CD8-positive, alpha-beta memory T cell (primary cell): ENCODE measurements at regions of chr5 and their contacts with region 1.

Region 1: DNA sequence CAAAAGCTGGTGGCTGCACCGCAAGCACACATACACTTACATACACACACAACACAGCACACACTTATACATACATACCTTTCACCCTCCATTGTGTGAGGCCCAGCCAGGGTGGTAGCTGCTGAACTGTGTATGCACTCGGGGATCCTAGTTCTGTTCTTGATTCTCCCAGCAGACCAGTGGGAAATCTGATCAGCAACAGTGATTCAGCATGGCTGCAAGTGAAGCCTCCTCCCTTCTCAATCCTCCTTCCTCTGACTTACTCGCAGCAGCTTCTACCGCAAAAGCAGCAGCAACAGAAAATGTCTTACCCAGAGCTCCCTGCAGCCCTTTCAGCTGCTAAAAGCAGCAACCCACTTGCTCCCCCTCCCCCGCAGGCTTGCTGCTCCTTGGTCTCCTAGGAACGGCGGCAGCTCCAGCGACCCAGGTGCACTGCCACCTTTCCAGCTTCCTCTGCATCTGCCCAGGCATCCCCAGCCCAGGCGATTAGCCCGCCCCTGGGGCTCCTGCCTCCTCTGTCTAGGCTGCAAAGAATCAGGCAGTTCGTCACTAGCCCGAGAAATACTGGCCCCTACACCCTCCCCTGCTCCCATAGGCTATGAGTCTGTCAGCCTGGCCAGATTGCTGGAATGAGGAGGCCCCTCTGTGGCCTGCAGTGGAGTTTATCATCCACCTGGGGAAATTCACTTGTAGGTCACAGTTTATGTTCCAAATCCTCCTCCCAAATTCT is at the start of gene KLHL3:
- DNase-seq: peak in 4 of 5 donors; percentile 2 to 52 (median 32)
- H3K4me3 ChIP-seq: peak within 1 kb of the TSS; percentile 74
- H3K4me3 Mint-ChIP-seq: no peak within 1 kb of the TSS
- H3K27ac ChIP-seq: no peak within 1 kb of the TSS
- H3K27ac Mint-ChIP-seq: no peak within 1 kb of the TSS
- H3K4me1 ChIP-seq: peaks cover 58% of the 10 kb centered on the region
- H3K4me1 Mint-ChIP-seq: peaks cover 0 to 16% (median 3%) of the 10 kb centered on the region in 3 donors
- H3K27me3 ChIP-seq: no peaks in the 10 kb centered on the region
- H3K27me3 Mint-ChIP-seq: no peaks in the 10 kb centered on the region
- total RNA-seq, gene KLHL3: 2.7 to 3.3 TPM

Region 2: GRCh38 chr5:137622850-137623249 is 112.9 kb before region 1 on chr5:
- CTCF ChIA-PET with region 1: no interaction called
- POLR2A ChIA-PET with region 1: no interaction called
- DNase-seq: no peak
- H3K4me3 ChIP-seq: no peak overlapping the region
- H3K4me3 Mint-ChIP-seq: no peak overlapping the region
- H3K27ac ChIP-seq: no peak overlapping the region
- H3K27ac Mint-ChIP-seq: peak overlapping the region in 1 of 8 donors; percentile 18
- H3K4me1 ChIP-seq: no peaks in the 10 kb centered on the region
- H3K4me1 Mint-ChIP-seq: no peaks in the 10 kb centered on the region
- H3K27me3 ChIP-seq: no peaks in the 10 kb centered on the region
- H3K27me3 Mint-ChIP-seq: no peaks in the 10 kb centered on the region

Region 3: GRCh38 chr5:137660349-137660817 is 75.3 kb before region 1 on chr5:
- CTCF ChIA-PET with region 1: interaction called, 170 read pairs
- POLR2A ChIA-PET with region 1: no interaction called
- DNase-seq: peak; percentile 46 to 76 (median 47)
- H3K4me3 ChIP-seq: no peak overlapping the region
- H3K4me3 Mint-ChIP-seq: no peak overlapping the region
- H3K27ac ChIP-seq: no peak overlapping the region
- H3K27ac Mint-ChIP-seq: no peak overlapping the region
- H3K4me1 ChIP-seq: no peaks in the 10 kb centered on the region
- H3K4me1 Mint-ChIP-seq: peaks cover 3 to 7% (median 7%) of the 10 kb centered on the region in 3 donors
- H3K27me3 ChIP-seq: no peaks in the 10 kb centered on the region
- H3K27me3 Mint-ChIP-seq: no peaks in the 10 kb centered on the region

Region 4: GRCh38 chr5:137679910-137680309 is 55.8 kb before region 1 on chr5:
- CTCF ChIA-PET with region 1: no interaction called
- POLR2A ChIA-PET with region 1: no interaction called
- DNase-seq: no peak
- H3K4me3 ChIP-seq: no peak overlapping the region
- H3K4me3 Mint-ChIP-seq: no peak overlapping the region
- H3K27ac ChIP-seq: no peak overlapping the region
- H3K27ac Mint-ChIP-seq: peak overlapping the region in 1 of 8 donors; percentile 43
- H3K4me1 ChIP-seq: no peaks in the 10 kb centered on the region
- H3K4me1 Mint-ChIP-seq: no peaks in the 10 kb centered on the region
- H3K27me3 ChIP-seq: no peaks in the 10 kb centered on the region
- H3K27me3 Mint-ChIP-seq: no peaks in the 10 kb centered on the region

Region 5: DNA sequence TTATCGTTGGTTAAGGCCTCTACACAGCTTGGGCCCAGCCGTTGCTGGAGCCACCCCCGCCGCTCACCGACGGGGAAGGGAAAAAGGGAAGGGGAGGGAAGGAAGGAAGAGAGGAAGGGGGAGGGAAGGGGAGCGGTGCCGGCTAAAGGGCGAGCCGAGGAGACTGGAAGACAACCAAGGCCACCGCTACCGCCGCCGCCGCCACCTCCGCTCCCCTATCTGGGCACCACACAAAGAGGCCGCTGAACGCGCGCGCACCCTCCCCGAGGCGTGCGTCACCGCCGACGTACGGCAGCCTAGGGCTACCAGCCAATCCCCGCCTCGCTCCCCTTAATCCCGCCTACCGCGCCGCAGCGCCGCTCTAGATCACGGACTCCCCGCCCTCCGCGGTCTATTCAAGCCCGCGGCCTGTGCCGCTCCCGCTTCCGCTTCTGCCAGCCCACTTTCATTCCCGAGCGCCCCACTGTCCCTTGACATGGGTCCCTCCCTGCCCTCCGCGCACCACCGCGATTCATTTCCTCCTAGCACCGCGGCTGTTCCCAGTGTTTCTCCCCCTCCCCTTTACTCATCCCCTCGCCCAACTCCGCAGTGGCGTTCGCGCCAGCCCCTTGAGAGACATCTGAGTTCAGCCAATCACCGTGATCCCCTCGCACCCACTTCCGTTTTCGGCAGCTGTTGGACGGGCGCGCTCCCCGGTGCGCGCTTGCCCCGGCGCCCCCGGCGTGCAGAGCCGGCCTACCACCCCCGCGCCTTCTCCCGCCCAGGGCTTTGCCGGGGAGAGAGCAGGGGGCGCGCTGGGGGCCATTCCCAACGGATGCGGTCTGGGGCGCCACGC is 18.6 kb after region 1 on chr5 and contains the start of gene HNRNPA0:
- CTCF ChIA-PET with region 1: interaction called, 20 read pairs
- POLR2A ChIA-PET with region 1: interaction called, 23 read pairs
- DNase-seq: peak; percentile 95 to 99 (median 98)
- H3K4me3 ChIP-seq: peak within 1 kb of the TSS; percentile 98
- H3K4me3 Mint-ChIP-seq: peak within 1 kb of the TSS; percentile 97 to 100 (median 99)
- H3K27ac ChIP-seq: peak within 1 kb of the TSS; percentile 100
- H3K27ac Mint-ChIP-seq: peak within 1 kb of the TSS; percentile 99 to 100 (median 100)
- H3K4me1 ChIP-seq: peaks cover 29% of the 10 kb centered on the region
- H3K4me1 Mint-ChIP-seq: peaks cover 31 to 41% (median 38%) of the 10 kb centered on the region in 3 donors
- H3K27me3 ChIP-seq: no peaks in the 10 kb centered on the region
- H3K27me3 Mint-ChIP-seq: peaks cover 4 to 10% of the 10 kb centered on the region in 2 donors
- total RNA-seq, gene HNRNPA0: 42.7 to 45.9 TPM